Ascending aorta (tissue), 2 donors: ENCODE measurements at regions of chr10 and their contacts with region 1.

Region 1: DNA sequence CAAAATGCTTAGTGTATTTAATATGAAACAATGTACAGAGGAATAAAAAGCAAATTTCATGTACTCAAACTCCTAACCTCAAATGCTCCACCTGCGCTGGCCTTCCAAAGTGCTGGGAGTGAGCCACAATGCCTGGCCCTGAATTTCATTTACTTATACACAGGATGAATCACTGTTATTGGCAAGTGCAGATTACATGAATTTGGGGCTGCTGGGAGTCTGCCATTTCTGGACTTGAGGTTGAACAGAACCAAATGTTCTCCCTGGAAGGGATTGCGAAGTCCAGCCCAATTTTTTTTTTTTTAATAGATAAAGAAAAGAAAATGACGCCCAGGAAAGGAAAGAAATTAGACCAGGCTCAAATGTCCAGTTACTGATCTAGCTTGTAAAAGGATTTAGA is 6.8 kb upstream of the CSTF2T start:
- DNase-seq: peak; percentile 75 to 97
- H3K4me3 ChIP-seq: no peak overlapping the region
- H3K27ac ChIP-seq: peak overlapping the region; percentile 88 to 92
- H3K4me1 ChIP-seq: peaks cover 4 to 47% of the 10 kb centered on the region in 2 donors
- H3K27me3 ChIP-seq: no peaks in the 10 kb centered on the region
- CTCF ChIP-seq: no peak

Region 2: GRCh38 chr10:51789903-51790302 is 83.7 kb after region 1 on chr10:
- intact Hi-C with region 1: loop called (anchors 5 kb)
- DNase-seq: no peak
- H3K4me3 ChIP-seq: no peak overlapping the region
- H3K27ac ChIP-seq: peak overlapping the region; percentile 6 to 51
- H3K4me1 ChIP-seq: peaks cover 0 to 17% of the 10 kb centered on the region in 2 donors
- H3K27me3 ChIP-seq: no peaks in the 10 kb centered on the region
- CTCF ChIP-seq: no peak

Region 3: GRCh38 chr10:51804866-51805265 is 98.6 kb after region 1 on chr10:
- intact Hi-C with region 1: no loop called
- DNase-seq: no peak
- H3K4me3 ChIP-seq: no peak overlapping the region
- H3K27ac ChIP-seq: peak overlapping the region; percentile 18 to 53
- H3K4me1 ChIP-seq: peaks cover 0 to 13% of the 10 kb centered on the region in 2 donors
- H3K27me3 ChIP-seq: no peaks in the 10 kb centered on the region
- CTCF ChIP-seq: no peak

Region 4: DNA sequence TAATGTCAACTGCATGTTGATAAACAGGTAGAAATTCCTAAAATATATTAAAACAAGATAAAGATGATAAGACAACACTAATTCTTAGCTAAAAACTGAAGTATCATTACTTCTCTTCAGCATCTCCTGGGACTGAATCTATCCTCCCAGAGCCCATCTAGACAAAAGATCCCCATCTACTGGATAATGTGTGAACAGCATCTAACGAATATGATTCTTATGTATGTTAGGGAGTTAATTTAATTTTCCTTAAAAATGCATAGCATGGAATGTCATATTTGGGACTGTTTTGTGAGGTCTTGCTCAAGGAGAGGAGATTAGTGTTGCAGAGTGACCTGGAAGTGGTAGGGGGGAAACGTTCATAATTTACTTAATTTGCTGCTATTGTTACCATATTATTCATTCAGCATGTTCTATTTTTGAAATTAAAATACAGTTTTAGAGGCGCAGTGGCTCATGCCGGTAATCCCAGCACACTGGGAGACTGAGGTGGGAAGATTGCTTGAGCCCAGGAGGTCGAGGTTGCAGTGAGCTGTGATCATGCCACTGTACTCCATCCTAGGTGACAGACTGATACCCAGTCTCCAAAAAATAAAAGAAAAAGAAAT is 298.2 kb after region 1 on chr10:
- intact Hi-C with region 1: loop called (anchors 5 kb)
- DNase-seq: no peak
- H3K4me3 ChIP-seq: no peak overlapping the region
- H3K27ac ChIP-seq: no peak overlapping the region
- H3K4me1 ChIP-seq: peaks cover 3 to 34% of the 10 kb centered on the region in 2 donors
- H3K27me3 ChIP-seq: no peaks in the 10 kb centered on the region
- CTCF ChIP-seq: peak; percentile 33 to 63 (median 53)